ENCODE measurements at regions of chr18 and their contacts with region 1.

Region 1: DNA sequence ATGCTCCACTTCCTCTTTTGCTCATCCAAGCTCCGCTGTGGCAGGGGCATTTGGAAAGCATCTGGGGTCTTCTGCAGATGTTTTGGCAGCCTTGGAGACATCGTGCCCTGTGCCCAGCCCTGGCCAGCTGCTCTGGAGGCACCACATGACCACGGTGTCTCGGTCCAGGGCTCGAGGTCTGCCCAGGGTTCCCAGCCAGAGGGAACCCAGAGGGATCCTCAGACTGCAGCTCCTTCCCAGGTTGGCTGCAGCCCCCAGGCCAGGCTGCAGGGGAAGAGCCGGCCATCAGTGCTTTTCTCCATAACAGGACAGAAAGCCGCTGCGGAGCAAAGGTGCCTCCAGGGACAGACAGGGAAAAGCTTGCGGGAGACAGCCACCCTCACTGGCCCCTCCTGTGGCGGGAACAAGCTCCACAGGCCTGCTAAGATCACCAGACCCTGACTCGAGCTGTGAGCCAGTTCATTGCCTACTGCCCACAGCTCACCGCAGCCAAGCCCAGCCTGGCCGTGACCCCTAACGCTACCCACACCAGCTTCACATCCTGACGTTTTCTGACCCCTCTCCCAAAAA is 74.7 kb downstream of the SMAD7 start:
- DNase-seq: no peak
- H3K4me3 ChIP-seq: no peak overlapping the region
- H3K27ac ChIP-seq: no peak overlapping the region
- H3K4me1 ChIP-seq: peaks cover 12 to 36% of the 10 kb centered on the region in 2 donors
- H3K27me3 ChIP-seq: no peaks in the 10 kb centered on the region
- CTCF ChIP-seq: peak in 2 of 3 experiments; percentile 12 to 34

Region 2: DNA sequence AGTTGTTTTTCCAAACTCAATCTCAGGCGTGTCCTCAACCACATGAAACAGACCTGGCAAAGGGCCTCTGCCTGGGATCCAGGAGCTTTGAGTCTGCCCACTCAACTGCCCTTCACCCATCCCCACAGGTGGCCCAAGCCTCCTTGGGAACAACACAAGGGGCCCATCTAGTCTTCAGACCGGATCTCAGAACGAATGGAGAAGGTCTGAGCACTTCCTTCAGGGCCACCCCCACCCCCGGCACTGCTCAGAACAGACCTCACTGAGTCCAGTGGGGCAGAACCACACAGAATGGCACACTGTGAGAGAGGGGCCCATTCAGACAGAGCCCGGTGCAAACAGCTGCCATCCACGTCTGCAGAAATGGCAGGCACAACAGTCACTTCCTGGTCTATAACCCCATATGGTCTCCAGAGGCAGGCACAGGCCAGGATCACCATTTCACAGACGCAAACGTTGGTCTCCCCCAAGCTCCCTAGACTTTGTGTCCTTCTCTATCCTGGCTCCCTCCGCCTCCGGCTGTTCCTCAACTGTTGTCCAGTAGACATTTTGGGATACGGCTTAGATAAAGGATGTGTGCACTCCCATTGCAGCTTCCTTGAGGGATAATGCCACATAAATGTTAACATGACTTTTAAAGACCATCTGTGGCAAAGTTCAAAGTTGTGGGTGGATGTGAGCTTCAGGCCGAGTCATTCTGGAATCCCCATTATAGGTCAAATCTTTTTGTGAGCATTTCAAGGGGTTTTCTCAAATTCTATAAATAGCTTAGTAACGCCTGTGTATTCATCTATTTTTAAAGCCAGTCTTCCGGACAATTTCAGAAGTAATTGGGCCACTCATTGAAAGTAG is 74.9 kb before region 1 on chr18:
- intact Hi-C with region 1: loop called (anchors 5 kb)
- DNase-seq: peak in 1 of 2 donors; percentile 67
- H3K4me3 ChIP-seq: no peak overlapping the region
- H3K27ac ChIP-seq: peak overlapping the region; percentile 86 to 88
- H3K4me1 ChIP-seq: peaks cover 22 to 55% of the 10 kb centered on the region in 2 donors
- H3K27me3 ChIP-seq: no peaks in the 10 kb centered on the region
- CTCF ChIP-seq: no peak

Region 3: DNA sequence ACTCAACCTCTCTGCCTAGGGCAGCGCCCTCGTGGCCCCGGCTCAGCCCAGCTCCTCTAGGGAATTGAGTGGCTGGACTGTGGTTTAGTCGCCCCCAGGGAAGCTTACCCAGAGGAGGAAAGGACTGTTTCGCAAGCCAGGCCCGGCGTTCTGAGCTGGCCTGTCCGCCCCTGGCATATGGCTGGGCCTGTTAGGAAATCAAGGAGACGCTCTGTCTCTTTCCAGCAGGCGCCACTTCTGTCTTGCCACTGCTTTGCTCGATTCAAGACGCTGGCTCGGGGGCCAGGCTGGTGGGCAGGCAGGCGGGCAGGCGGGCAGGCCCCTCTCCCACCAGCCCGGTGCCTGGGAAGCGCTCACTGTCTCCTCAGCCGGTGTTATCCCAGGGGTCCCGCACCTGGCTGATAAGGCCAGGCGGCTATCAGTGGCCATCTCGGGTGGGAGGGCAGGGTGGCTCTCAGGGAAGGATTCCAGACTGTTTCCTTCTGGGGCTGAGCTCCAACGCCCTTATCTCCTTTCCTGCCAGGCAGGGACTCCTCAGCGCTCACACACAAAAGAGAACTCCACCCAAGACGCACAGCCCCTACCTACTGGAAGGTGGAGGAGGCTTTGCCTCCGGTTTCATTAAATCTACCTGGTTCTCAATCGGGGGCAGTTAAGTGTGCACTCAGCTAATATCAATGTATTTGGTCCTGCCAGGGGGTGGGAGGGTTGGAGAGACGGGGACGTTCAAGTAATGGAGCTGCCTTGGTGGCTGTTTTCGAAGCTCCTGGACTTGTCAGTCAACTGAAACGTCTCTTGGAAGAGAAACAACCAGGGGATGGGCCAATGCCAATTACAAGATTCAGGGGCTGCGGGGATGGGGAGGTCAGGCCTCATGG is 34.4 kb before region 1 on chr18:
- intact Hi-C with region 1: loop called (anchors 2 kb)
- DNase-seq: peak; percentile 51 to 92
- H3K4me3 ChIP-seq: no peak overlapping the region
- H3K27ac ChIP-seq: peak overlapping the region; percentile 83 to 91
- H3K4me1 ChIP-seq: peaks cover 0 to 34% of the 10 kb centered on the region in 2 donors
- H3K27me3 ChIP-seq: no peaks in the 10 kb centered on the region
- CTCF ChIP-seq: no peak

Region 4: GRCh38 chr18:48902023-48902855 is 26.2 kb after region 1 on chr18:
- intact Hi-C with region 1: loop called (anchors 1 kb)
- DNase-seq: peak; percentile 82 to 98
- H3K4me3 ChIP-seq: no peak overlapping the region
- H3K27ac ChIP-seq: peak overlapping the region; percentile 94
- H3K4me1 ChIP-seq: peaks cover 13 to 26% of the 10 kb centered on the region in 2 donors
- H3K27me3 ChIP-seq: no peaks in the 10 kb centered on the region
- CTCF ChIP-seq: no peak

Region 5: GRCh38 chr18:48934723-48935432 is 58.9 kb after region 1 on chr18:
- intact Hi-C with region 1: loop called (anchors 2 kb)
- DNase-seq: no peak
- H3K4me3 ChIP-seq: peak overlapping the region; percentile 32 to 47
- H3K27ac ChIP-seq: peak overlapping the region; percentile 97 to 99
- H3K4me1 ChIP-seq: peaks cover 65 to 93% of the 10 kb centered on the region in 2 donors
- H3K27me3 ChIP-seq: no peaks in the 10 kb centered on the region
- CTCF ChIP-seq: no peak

Region 6: DNA sequence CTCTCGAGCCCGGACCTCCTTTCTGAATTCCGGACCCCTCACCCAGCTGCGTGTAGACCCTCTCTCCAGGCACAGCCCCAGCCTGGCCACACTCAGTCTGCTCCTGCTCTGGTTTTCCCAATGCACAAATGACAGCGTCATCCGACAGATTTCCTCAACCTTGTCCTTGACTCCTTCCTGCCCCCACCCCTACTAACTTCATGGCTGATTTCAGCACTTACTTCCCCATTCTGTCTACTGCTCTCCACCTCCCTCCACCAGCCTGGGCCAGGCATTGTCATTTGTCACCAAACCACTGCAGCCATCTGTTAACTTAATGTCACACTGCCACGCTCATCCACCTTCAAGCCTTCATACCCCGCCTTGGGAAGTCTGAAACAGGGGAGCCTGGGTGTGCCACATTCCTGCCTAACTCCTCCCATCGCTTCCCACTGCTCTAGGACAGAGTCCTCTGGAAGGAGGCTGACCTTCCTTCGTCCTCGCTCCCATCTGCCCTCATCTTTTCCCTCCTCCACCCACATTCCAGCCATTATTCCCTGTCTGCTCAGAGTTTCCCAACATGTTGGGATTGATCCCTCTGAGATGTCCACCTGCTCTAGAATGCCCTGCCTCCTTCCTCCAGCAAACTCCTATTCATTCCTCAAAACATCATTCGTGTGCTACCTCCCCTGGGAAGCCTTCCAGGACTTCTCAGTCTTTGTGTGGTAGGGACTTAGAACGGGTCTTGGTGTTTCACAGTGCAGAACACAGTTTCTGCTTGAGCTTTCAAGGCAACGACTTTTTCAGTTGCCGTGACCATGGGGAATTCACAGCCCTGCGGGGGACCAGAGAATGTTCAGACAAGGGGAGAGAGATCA is 116.9 kb after region 1 on chr18:
- intact Hi-C with region 1: loop called (anchors 5 kb)
- DNase-seq: no peak
- H3K4me3 ChIP-seq: no peak overlapping the region
- H3K27ac ChIP-seq: peak overlapping the region; percentile 77 to 86
- H3K4me1 ChIP-seq: peaks cover 30 to 62% of the 10 kb centered on the region in 2 donors
- H3K27me3 ChIP-seq: no peaks in the 10 kb centered on the region
- CTCF ChIP-seq: no peak